ENCODE measurements at regions of chr2 and their contacts with region 1.

Region 1: DNA sequence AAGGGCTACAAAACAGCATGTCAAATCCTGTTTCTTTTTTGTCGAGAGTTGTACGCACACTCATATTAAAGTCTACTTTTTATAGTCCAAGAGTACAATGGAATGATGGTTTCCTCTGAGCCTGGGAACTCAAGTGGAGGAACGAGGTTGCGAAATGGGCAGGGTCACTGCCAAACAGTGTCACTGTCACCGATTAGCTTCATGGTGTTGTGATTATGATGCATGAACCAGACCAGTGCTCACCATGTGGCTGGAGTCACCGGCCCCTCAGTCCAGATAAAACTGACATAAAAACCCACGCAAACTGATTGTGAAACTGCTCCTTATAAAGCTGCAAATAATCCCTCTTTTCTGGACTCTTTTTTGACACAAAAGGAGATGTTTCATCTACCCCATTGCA is 122.0 kb downstream of the COPS8 start:
- DNase-seq: peak; percentile 85

Region 2: GRCh38 chr2:237097911-237098702 is 109.5 kb before region 1 on chr2:
- intact Hi-C with region 1: no loop called
- DNase-seq: no peak

Region 3: DNA sequence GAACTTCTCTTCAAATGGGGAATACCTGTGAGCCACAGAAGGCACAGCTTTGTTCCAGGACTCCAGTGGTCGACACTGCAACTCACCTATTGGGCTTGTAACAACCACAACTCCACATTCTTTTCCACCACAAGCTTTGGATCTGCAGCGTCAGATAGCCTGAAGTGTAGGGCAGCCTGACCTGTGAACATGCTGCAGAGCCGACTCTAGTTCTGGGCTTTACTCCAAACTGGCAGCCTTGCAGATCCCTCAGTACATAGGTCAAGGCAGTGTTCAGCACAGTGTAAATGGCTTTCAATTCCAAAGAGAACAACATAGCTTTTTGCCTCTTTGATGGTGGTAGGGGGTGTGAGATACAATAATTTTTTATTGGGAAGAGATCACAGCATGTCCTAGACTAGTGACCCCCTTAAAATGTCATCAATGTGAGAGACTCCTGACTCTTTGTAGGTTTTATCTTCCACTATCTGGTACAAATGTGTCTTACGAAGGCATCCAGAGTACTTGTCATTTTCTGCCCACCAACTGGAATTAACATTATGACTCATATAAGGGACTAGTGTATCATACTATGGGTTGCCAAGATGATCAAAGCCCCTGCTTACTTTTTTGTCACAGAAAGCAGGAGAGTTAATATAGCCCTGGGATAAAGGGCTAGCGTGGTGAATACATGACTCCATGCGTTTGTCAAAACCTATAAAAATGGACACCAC is 27.9 kb after region 1 on chr2:
- intact Hi-C with region 1: loop called (anchors 1 kb)
- DNase-seq: peak; percentile 80

Region 4: GRCh38 chr2:237291138-237291792 is 83.6 kb after region 1 on chr2:
- intact Hi-C with region 1: loop called (anchors 1 kb)
- DNase-seq: peak; percentile 95

Region 5: DNA sequence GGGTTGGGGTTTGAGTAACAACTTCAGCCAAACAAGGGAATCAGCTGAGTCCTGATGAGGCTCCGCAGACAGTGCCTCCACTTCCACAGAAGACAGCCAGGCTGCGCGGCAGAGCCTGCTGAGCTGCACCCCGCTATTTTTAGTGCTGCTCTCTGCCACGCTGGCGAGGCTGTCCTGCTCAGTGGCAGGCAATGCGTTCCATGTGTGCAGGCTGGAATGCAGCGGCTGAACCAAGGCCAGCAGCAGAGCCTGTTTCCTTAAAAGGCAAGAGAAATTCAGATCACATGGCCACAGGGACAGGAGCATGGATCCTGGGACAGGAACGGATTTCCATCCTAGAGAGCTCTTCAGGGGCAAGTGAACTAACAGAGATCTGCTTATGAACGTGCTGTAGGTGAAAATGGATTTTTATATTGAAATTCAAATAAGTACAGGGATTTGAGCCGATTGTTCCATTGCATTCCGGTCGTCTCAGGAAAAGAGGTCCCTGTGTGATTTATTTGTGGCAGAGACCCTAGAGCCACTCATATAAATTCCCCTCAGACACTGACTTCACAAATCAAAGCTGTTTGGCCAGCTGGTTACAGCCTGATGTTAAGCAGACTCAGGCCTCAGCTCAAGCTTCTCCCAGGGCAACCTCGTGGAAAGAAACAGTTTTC is 107.7 kb after region 1 on chr2:
- intact Hi-C with region 1: loop called (anchors 2 kb)
- DNase-seq: peak; percentile 94

Region 6: GRCh38 chr2:237345891-237346640 is 138.4 kb after region 1 on chr2:
- intact Hi-C with region 1: no loop called
- DNase-seq: no peak

Region 7: GRCh38 chr2:237408335-237409000 is 200.8 kb after region 1 on chr2:
- intact Hi-C with region 1: loop called (anchors 5 kb)
- DNase-seq: no peak

Region 8: GRCh38 chr2:237662671-237663093 is 455.0 kb after region 1 on chr2:
- intact Hi-C with region 1: no loop called
- DNase-seq: peak; percentile 89